Activated CD8-positive, alpha-beta T cell treated with anti-CD3 and anti-CD28 coated beads for 36 hours (primary cell): ENCODE measurements at regions of chr15 and their contacts with region 1.

Region 1: GRCh38 chr15:57146506-57147201 is 228.2 kb downstream of the TCF12 start:
- DNase-seq: peak; percentile 16
- ATAC-seq: no peak
- H3K4me3 Mint-ChIP-seq: no peak overlapping the region
- H3K27ac Mint-ChIP-seq: no peak overlapping the region
- H3K4me1 Mint-ChIP-seq: peaks cover 4% of the 10 kb centered on the region
- H3K27me3 Mint-ChIP-seq: no peaks in the 10 kb centered on the region
- CTCF ChIP-seq: peak; percentile 75

Region 2: DNA sequence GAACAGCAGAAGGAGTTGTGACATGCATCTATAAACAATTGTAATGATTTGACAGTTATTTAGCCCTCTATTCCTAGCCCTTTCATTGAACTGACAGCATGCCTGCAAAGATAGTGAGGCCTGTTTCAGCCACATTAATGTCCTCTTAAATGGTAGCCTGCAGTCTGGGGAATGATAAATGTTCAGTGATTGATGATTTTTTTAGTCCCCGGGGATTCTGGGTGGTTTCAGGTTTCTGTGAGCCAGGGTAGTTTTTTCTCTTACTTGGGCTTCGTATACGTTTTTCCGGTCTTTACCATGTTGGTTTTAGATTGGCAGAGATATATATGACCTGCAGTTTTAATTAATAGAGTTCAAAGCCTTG is 56.2 kb before region 1 on chr15:
- CTCF ChIA-PET with region 1: no interaction called
- POLR2A ChIA-PET with region 1: no interaction called
- intact Hi-C with region 1: no loop called
- DNase-seq: no peak
- ATAC-seq: no peak
- H3K4me3 Mint-ChIP-seq: no peak overlapping the region
- H3K27ac Mint-ChIP-seq: no peak overlapping the region
- H3K4me1 Mint-ChIP-seq: peaks cover 9% of the 10 kb centered on the region
- H3K27me3 Mint-ChIP-seq: no peaks in the 10 kb centered on the region
- CTCF ChIP-seq: no peak

Region 3: GRCh38 chr15:57133127-57133968 is 13.3 kb before region 1 on chr15:
- CTCF ChIA-PET with region 1: interaction called, 14 read pairs
- POLR2A ChIA-PET with region 1: interaction called, 3 read pairs
- intact Hi-C with region 1: no loop called
- DNase-seq: peak; percentile 25
- ATAC-seq: peak; percentile 78
- H3K4me3 Mint-ChIP-seq: no peak overlapping the region
- H3K27ac Mint-ChIP-seq: peak overlapping the region; percentile 66
- H3K4me1 Mint-ChIP-seq: peaks cover 65% of the 10 kb centered on the region
- H3K27me3 Mint-ChIP-seq: no peaks in the 10 kb centered on the region
- CTCF ChIP-seq: no peak

Region 4: GRCh38 chr15:57205996-57206395 is 59.3 kb after region 1 on chr15:
- CTCF ChIA-PET with region 1: interaction called, 5 read pairs
- POLR2A ChIA-PET with region 1: no interaction called
- intact Hi-C with region 1: loop called (anchors 10 kb)
- DNase-seq: no peak
- ATAC-seq: no peak
- H3K4me3 Mint-ChIP-seq: no peak overlapping the region
- H3K27ac Mint-ChIP-seq: no peak overlapping the region
- H3K4me1 Mint-ChIP-seq: peaks cover 2% of the 10 kb centered on the region
- H3K27me3 Mint-ChIP-seq: no peaks in the 10 kb centered on the region
- CTCF ChIP-seq: no peak

Region 5: GRCh38 chr15:57213862-57214261 is 67.2 kb after region 1 on chr15:
- CTCF ChIA-PET with region 1: interaction called, 11 read pairs
- POLR2A ChIA-PET with region 1: no interaction called
- intact Hi-C with region 1: loop called (anchors 10 kb)
- DNase-seq: no peak
- ATAC-seq: no peak
- H3K4me3 Mint-ChIP-seq: no peak overlapping the region
- H3K27ac Mint-ChIP-seq: no peak overlapping the region
- H3K4me1 Mint-ChIP-seq: peaks cover 25% of the 10 kb centered on the region
- H3K27me3 Mint-ChIP-seq: no peaks in the 10 kb centered on the region
- CTCF ChIP-seq: peak; percentile 29

Region 6: DNA sequence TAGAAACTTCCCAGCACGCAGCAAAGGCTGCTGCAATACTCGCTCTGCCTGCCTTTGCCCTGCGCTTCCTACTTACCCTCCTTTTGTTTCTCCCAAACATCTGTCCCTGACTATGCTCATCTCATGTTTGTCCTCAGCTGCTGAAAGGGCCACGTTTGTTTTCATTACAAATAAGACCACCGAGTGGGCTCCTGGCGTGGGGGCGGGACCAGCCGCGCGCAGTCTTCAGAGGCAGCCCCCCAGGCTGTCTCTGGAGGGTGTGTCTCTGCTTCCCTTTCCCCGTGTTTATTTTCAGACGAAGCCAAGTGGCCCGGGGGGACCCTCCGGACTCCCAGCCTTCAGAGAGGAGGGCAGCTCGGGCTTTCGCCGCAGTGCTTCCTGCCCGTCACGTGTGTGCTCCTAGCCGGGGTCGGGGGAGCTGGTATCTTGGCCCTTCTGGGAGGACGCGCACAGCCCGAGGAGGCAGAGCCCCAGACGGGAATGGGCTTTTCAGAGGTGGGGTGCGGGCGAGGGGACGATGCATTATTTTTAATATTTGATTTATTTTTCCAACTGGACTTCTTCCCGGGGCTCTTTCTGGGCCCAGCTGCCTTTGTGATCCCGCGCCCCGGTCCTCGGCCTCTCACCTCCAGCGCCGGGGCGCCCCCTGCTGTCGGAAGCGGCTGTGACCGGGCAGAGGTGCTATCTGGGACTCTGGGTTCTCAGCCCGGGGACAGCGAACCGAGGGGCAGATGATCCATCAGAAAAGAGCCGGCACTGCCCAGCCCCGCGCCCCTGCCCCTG is 159.7 kb after region 1 on chr15:
- CTCF ChIA-PET with region 1: interaction called, 82 read pairs
- POLR2A ChIA-PET with region 1: no interaction called
- intact Hi-C with region 1: loop called (anchors 5 kb)
- DNase-seq: peak; percentile 89
- ATAC-seq: peak; percentile 93
- H3K4me3 Mint-ChIP-seq: peak overlapping the region; percentile 59
- H3K27ac Mint-ChIP-seq: no peak overlapping the region
- H3K4me1 Mint-ChIP-seq: no peaks in the 10 kb centered on the region
- H3K27me3 Mint-ChIP-seq: peaks cover 14% of the 10 kb centered on the region
- CTCF ChIP-seq: peak; percentile 89